ENCODE measurements at regions of chr12 and their contacts with region 1.

Region 1: DNA sequence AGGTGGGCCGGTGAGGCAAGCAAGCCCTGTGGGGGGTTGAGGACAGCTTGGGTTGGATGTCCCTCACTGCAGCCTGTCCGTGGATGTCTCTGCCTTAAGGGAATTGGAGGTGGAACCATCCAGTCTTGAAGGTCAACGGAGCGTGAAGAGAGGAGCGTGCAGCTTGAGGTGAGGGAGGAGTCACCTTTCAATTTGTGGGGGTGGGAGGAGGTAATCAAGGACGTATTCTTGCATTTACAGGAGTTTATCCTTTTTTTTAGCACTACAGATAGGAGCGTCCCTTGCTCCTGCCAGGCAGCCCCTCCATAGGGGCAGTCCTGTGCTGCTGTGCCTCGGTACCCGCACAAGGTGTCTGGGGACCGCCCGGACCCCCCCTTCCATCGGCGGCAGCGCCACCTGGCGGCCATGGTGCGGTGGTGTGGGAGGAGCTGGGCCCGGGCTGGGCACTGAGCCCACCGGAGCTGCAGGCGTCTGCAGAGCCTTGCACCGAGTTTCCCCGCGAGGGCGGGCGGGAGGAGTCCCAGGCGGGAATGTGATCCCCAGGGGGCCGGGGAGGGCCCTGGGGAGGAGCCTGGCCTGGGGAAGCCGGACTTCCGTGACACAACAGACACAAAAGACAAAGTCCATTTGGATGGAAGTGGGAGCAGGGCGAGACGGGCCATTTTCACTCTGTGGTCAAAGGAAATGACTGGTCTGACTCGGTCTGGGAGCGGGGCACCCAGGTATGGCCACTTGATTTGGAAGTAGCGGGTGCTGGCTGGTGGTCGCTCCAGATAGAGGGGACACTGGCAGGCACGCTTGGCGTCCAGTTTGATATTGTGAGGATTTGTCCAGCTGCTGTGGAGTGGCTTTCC is 923 bp downstream of the DNAJC22 start:
- DNase-seq: peak; percentile 44 to 85 (median 71)
- ATAC-seq: peak; percentile 80 to 86 (median 82)
- H3K4me3 ChIP-seq: peak overlapping the region; percentile 47 to 86
- H3K4me3 Mint-ChIP-seq: peak overlapping the region; percentile 73 to 80 (median 80)
- H3K27ac ChIP-seq: no peak overlapping the region
- H3K27ac Mint-ChIP-seq: peak overlapping the region in 1 of 2 donors; percentile 43
- H3K4me1 ChIP-seq: peaks cover 30 to 55% of the 10 kb centered on the region in 2 experiments
- H3K4me1 Mint-ChIP-seq: peaks cover 31 to 48% (median 42%) of the 10 kb centered on the region in 3 donors
- H3K27me3 ChIP-seq: peaks cover 23 to 91% of the 10 kb centered on the region in 2 experiments
- H3K27me3 Mint-ChIP-seq: peaks cover 40 to 75% of the 10 kb centered on the region in 2 donors

Region 2: DNA sequence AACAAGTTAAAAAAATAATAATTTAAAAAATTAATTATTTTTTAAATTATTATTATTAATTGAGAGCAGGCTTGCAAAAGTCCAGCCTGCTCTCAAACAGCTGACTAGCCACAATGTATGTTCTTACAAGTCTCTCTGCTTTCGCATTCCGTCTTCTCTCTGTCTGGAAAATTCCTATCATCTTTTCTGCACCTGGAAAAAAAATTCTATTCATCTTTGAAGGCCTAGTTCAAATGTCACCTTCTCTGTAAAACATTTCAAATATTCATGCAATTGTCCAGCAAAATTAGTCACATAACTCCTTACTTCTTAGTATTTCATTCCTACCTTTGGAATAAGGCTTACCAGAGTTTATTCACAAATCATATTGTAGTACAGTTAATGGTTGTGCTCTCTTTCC is 1717.3 kb before region 1 on chr12:
- CTCF ChIA-PET with region 1: no interaction called
- POLR2A ChIA-PET with region 1: no interaction called
- DNase-seq: no peak
- ATAC-seq: no peak
- H3K4me3 ChIP-seq: no peak overlapping the region
- H3K4me3 Mint-ChIP-seq: no peak overlapping the region
- H3K27ac ChIP-seq: no peak overlapping the region
- H3K27ac Mint-ChIP-seq: no peak overlapping the region
- H3K4me1 ChIP-seq: no peaks in the 10 kb centered on the region
- H3K4me1 Mint-ChIP-seq: peaks cover 5 to 7% (median 5%) of the 10 kb centered on the region in 3 donors
- H3K27me3 ChIP-seq: no peaks in the 10 kb centered on the region
- H3K27me3 Mint-ChIP-seq: no peaks in the 10 kb centered on the region

Region 3: GRCh38 chr12:49288412-49288853 is 59.2 kb before region 1 on chr12:
- CTCF ChIA-PET with region 1: interaction called, 5 to 20 read pairs
- POLR2A ChIA-PET with region 1: no interaction called
- DNase-seq: peak in 34 of 35 experiments; percentile 22 to 86 (median 58)
- ATAC-seq: peak; percentile 68 to 77 (median 74)
- H3K4me3 ChIP-seq: no peak overlapping the region
- H3K4me3 Mint-ChIP-seq: no peak overlapping the region
- H3K27ac ChIP-seq: no peak overlapping the region
- H3K27ac Mint-ChIP-seq: no peak overlapping the region
- H3K4me1 ChIP-seq: no peaks in the 10 kb centered on the region
- H3K4me1 Mint-ChIP-seq: no peaks in the 10 kb centered on the region
- H3K27me3 ChIP-seq: peaks cover 6 to 54% of the 10 kb centered on the region in 2 experiments
- H3K27me3 Mint-ChIP-seq: peaks cover 29 to 49% of the 10 kb centered on the region in 2 donors

Region 4: GRCh38 chr12:49305762-49306510 is 41.7 kb before region 1 on chr12:
- CTCF ChIA-PET with region 1: no interaction called
- POLR2A ChIA-PET with region 1: no interaction called
- DNase-seq: no peak
- ATAC-seq: no peak
- H3K4me3 ChIP-seq: no peak overlapping the region
- H3K4me3 Mint-ChIP-seq: no peak overlapping the region
- H3K27ac ChIP-seq: no peak overlapping the region
- H3K27ac Mint-ChIP-seq: no peak overlapping the region
- H3K4me1 ChIP-seq: no peaks in the 10 kb centered on the region
- H3K4me1 Mint-ChIP-seq: peaks cover 0 to 3% (median 0%) of the 10 kb centered on the region in 3 donors
- H3K27me3 ChIP-seq: peaks cover 0 to 21% of the 10 kb centered on the region in 2 experiments
- H3K27me3 Mint-ChIP-seq: peaks cover 43 to 51% of the 10 kb centered on the region in 2 donors

Region 5: DNA sequence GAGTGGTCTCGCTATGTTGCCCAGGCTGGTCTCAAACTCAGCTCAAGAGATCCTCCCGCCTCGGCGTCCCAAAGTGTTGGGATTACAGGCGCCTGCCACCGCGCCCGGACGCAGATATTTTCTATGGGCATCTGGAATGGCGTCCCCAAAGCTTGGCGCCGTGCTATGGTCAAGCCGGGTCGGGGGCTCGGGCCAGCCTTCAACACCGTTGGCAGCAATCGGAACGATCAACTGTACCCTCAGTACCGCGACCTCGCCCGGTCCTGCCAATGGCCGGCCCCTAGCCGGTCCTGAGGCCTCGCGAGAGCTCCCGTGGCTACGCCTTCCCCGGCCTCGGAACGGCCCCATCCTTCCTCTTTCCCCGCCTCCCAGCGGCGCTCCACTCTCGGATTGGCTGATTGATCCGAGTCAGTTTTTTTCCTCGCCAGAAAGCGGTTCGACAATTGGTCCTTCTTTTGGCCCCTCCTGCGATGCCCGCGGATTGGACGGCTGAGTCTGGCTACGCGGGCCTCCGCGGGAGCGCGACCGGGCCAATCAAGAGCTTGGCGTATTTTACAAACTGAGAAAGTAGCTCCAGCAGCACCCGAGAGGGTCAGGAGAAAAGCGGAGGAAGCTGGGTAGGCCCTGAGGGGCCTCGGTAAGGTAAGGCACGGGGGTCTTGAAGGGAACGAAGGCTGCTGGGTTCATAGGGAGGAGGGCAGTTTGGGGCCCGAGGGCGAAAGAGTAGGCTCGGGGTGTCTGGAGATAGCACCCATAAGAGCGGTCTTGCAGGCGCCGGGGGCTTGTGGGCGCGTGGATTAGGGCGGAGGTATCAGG is 24.7 kb before region 1 on chr12 and contains the start of gene TROAP:
- CTCF ChIA-PET with region 1: interaction called in 1 of 2 experiments, 12 read pairs
- POLR2A ChIA-PET with region 1: no interaction called
- DNase-seq: peak; percentile 92 to 98 (median 96)
- ATAC-seq: peak; percentile 96 to 99 (median 98)
- H3K4me3 ChIP-seq: peak within 1 kb of the TSS; percentile 83 to 95
- H3K4me3 Mint-ChIP-seq: peak within 1 kb of the TSS; percentile 86 to 90 (median 87)
- H3K27ac ChIP-seq: peak within 1 kb of the TSS; percentile 60
- H3K27ac Mint-ChIP-seq: peak within 1 kb of the TSS; percentile 71 to 75
- H3K4me1 ChIP-seq: peaks cover 5 to 22% of the 10 kb centered on the region in 2 experiments
- H3K4me1 Mint-ChIP-seq: peaks cover 17 to 22% (median 20%) of the 10 kb centered on the region in 3 donors
- H3K27me3 ChIP-seq: no peaks in the 10 kb centered on the region
- H3K27me3 Mint-ChIP-seq: no peaks in the 10 kb centered on the region
- total RNA-seq, gene TROAP: 0.98 to 1.9 (median 1.3) TPM

Region 6: DNA sequence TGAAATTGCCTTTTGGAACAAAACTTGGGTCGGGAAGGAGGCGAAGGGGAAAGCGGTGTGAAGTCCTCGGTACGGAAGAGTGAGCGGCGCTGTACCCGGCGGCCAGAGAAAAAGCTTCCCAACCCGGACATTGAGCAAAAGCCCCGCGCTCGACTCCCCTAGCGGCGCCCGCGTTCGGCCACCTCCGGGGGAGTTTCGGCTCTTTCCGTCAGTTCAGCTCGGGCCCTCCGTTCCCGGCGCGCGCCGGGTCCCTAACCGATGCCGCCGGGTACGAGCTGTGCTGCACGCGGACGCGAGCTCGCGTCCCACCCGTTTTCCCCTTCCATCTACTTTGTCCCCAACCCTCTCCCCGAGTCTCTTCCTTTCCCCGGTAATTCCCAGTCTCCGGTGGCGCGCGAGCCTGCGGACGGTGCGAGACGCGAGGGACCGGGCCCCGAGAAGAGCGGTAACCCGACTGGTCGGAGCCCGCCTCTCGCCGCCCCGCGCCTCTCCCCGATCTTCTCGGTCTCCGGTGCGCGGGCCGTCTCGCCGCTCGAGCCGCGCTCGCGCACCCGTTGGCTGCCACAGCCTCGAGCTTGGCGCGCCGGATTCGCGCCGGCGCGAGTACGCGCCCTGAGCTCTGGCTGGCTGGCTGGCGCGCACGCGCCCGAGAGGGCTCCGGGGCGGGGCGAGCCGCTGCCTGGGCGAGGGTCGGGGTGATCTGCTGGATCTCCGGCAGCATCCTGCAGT is 19.2 kb after region 1 on chr12:
- CTCF ChIA-PET with region 1: interaction called, 3 to 12 read pairs
- POLR2A ChIA-PET with region 1: no interaction called
- DNase-seq: peak; percentile 67 to 89 (median 81)
- ATAC-seq: peak; percentile 83 to 89 (median 87)
- H3K4me3 ChIP-seq: peak overlapping the region; percentile 82 to 97
- H3K4me3 Mint-ChIP-seq: peak overlapping the region; percentile 84 to 97 (median 96)
- H3K27ac ChIP-seq: peak overlapping the region; percentile 64
- H3K27ac Mint-ChIP-seq: peak overlapping the region; percentile 92 to 96
- H3K4me1 ChIP-seq: peaks cover 0 to 15% of the 10 kb centered on the region in 2 experiments
- H3K4me1 Mint-ChIP-seq: peaks cover 30 to 32% (median 32%) of the 10 kb centered on the region in 3 donors
- H3K27me3 ChIP-seq: no peaks in the 10 kb centered on the region
- H3K27me3 Mint-ChIP-seq: no peaks in the 10 kb centered on the region

Region 7: DNA sequence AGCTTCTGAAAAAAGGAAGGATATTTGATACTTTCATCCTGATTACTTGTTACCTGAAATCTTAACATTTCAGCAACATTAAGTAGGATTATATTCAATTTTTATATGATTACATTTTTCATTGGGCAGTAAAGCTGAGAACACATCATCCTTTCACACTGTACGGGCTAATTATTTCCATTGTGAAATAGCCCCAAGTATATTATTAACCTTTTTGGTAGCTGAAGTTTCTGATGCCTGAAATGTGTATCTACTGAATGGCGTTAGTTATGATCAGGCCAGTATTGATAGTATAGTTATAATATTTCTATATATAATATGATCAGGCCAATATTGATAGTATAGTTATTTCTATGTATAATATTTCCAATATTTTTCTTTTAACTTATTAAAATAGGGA is 29.8 kb after region 1 on chr12:
- CTCF ChIA-PET with region 1: no interaction called
- POLR2A ChIA-PET with region 1: no interaction called
- DNase-seq: no peak
- ATAC-seq: no peak
- H3K4me3 ChIP-seq: no peak overlapping the region
- H3K4me3 Mint-ChIP-seq: no peak overlapping the region
- H3K27ac ChIP-seq: no peak overlapping the region
- H3K27ac Mint-ChIP-seq: no peak overlapping the region
- H3K4me1 ChIP-seq: no peaks in the 10 kb centered on the region
- H3K4me1 Mint-ChIP-seq: peaks cover 0 to 6% (median 0%) of the 10 kb centered on the region in 3 donors
- H3K27me3 ChIP-seq: no peaks in the 10 kb centered on the region
- H3K27me3 Mint-ChIP-seq: no peaks in the 10 kb centered on the region